RWPE1 (cell line): ENCODE measurements at regions of chr6 and their contacts with region 1.

Region 1: DNA sequence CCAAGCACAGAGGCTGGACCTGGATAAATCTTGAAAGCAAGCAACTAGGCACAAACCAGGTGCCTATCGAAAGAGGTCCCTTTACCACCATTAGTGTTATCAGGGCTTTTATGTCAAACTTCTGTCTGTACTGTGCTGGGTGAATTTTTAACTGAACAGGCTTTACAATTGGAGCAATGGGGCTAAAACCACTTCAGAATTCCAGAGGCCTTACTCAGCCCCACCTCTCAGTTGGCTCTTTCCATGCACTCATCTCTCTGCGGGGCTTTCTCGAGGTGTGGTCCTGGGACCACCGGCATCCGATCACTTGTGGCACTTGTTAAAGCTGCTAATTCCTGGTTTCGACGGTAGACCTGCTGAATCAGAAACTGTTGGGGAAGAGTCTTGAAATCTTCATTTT is 232.5 kb downstream of the SOX4 start:
- DNase-seq: no peak
- H3K27ac ChIP-seq: no peak overlapping the region
- CTCF ChIP-seq: no peak

Region 2: DNA sequence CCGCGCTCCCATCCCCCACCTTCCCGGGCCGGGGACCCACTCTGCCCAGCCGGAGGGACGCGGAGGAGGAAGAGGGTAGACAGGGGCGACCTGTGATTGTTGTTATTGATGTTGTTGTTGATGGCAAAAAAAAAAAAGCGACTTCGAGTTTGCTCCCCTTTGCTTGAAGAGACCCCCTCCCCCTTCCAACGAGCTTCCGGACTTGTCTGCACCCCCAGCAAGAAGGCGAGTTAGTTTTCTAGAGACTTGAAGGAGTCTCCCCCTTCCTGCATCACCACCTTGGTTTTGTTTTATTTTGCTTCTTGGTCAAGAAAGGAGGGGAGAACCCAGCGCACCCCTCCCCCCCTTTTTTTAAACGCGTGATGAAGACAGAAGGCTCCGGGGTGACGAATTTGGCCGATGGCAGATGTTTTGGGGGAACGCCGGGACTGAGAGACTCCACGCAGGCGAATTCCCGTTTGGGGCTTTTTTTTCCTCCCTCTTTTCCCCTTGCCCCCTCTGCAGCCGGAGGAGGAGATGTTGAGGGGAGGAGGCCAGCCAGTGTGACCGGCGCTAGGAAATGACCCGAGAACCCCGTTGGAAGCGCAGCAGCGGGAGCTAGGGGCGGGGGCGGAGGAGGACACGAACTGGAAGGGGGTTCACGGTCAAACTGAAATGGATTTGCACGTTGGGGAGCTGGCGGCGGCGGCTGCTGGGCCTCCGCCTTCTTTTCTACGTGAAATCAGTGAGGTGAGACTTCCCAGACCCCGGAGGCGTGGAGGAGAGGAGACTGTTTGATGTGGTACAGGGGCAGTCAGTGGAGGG is 229.7 kb before region 1 on chr6:
- CTCF ChIA-PET with region 1: interaction called, 10 read pairs
- POLR2A ChIA-PET with region 1: no interaction called
- DNase-seq: peak; percentile 50
- H3K27ac ChIP-seq: peak overlapping the region; percentile 96
- CTCF ChIP-seq: no peak

Region 3: GRCh38 chr6:21811484-21811883 is 14.5 kb before region 1 on chr6:
- CTCF ChIA-PET with region 1: no interaction called
- POLR2A ChIA-PET with region 1: no interaction called
- DNase-seq: no peak
- H3K27ac ChIP-seq: no peak overlapping the region
- CTCF ChIP-seq: no peak